Mammary epithelial cell (primary cell): ENCODE measurements at regions of chr2 and their contacts with region 1.

Region 1: DNA sequence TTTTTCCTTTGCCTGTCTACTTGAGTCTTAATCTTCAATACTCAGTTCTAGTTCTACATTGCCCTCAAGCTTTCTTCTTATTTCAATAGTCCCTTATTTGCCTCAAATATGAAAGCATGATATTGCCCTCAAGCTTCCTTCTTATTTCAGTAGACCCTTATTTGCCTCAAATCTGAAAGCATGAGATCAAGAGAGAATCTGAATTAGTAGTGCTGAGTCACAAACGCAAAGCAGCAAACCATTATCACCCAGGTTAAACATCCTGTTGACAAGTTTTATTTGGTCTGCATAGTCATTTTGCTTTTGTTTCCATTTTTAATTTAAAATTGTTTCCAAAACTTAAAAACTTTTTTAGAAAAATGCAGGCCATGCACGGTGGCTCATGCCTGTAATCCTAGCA is 583.3 kb upstream of the FSHR start:
- DNase-seq: no peak
- H3K4me3 ChIP-seq: no peak overlapping the region
- H3K27ac ChIP-seq: no peak overlapping the region
- H3K4me1 ChIP-seq: no peaks in the 10 kb centered on the region
- H3K27me3 ChIP-seq: no peaks in the 10 kb centered on the region
- CTCF ChIP-seq: no peak

Region 2: DNA sequence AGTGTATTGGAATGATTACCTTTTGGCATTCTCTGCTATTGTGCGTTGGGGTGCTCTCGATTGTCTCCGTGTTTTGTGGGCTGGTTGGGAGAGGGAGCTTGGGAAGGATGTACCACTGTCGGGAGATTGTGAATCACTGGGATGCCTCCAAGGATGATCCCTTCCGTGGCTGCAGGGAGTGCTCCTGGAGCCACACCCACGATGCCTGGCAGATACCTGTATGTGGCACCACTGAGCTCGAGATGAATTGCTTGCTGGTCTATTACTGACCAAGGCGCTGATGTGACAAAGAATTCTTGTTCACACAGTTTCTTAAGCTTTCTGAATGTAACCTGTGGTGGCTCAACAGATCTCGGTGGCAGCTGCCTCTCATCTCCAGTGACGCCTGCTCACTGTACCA is 822.4 kb before region 1 on chr2:
- CTCF ChIA-PET with region 1: interaction called, 12 read pairs
- dilution Hi-C with region 1: no loop called
- in situ Hi-C with region 1: no loop called
- intact Hi-C with region 1: no loop called
- DNase-seq: no peak
- H3K4me3 ChIP-seq: no peak overlapping the region
- H3K27ac ChIP-seq: no peak overlapping the region
- H3K4me1 ChIP-seq: no peaks in the 10 kb centered on the region
- H3K27me3 ChIP-seq: no peaks in the 10 kb centered on the region
- CTCF ChIP-seq: no peak

Region 3: GRCh38 chr2:50763776-50764175 is 1026.2 kb after region 1 on chr2:
- CTCF ChIA-PET with region 1: no interaction called
- dilution Hi-C with region 1: no loop called
- in situ Hi-C with region 1: no loop called
- intact Hi-C with region 1: no loop called
- DNase-seq: no peak
- H3K4me3 ChIP-seq: no peak overlapping the region
- H3K27ac ChIP-seq: no peak overlapping the region
- H3K4me1 ChIP-seq: no peaks in the 10 kb centered on the region
- H3K27me3 ChIP-seq: no peaks in the 10 kb centered on the region
- CTCF ChIP-seq: no peak